H1 (cell line): ENCODE measurements at regions of chrX and their contacts with region 1.

Region 1: GRCh38 chrX:118603981-118604380 is 108.4 kb downstream of the DOCK11 start:
- DNase-seq: peak in 1 of 2 experiments; percentile 49
- H3K4me3 ChIP-seq: no peak overlapping the region
- H3K27ac ChIP-seq: no peak overlapping the region
- H3K4me1 ChIP-seq: no peaks in the 10 kb centered on the region
- H3K27me3 ChIP-seq: no peaks in the 10 kb centered on the region
- CTCF ChIP-seq: peak; percentile 47 to 74 (median 64)
- EP300 ChIP-seq: no peak
- POLR2A ChIP-seq: no peak
- RAD21 ChIP-seq: peak; percentile 66 to 81

Region 2: GRCh38 chrX:118459494-118459893 is 144.5 kb before region 1 on chrX:
- CTCF ChIA-PET with region 1: interaction called, 48 read pairs
- POLR2A ChIA-PET with region 1: interaction called, 3 read pairs
- DNase-seq: no peak
- H3K4me3 ChIP-seq: no peak overlapping the region
- H3K27ac ChIP-seq: no peak overlapping the region
- H3K4me1 ChIP-seq: no peaks in the 10 kb centered on the region
- H3K27me3 ChIP-seq: no peaks in the 10 kb centered on the region
- CTCF ChIP-seq: peak in 2 of 3 experiments; percentile 47 to 58; a peak in 3 of 4 replicates
- EP300 ChIP-seq: no peak
- POLR2A ChIP-seq: no peak
- RAD21 ChIP-seq: peak; percentile 74 to 77

Region 3: DNA sequence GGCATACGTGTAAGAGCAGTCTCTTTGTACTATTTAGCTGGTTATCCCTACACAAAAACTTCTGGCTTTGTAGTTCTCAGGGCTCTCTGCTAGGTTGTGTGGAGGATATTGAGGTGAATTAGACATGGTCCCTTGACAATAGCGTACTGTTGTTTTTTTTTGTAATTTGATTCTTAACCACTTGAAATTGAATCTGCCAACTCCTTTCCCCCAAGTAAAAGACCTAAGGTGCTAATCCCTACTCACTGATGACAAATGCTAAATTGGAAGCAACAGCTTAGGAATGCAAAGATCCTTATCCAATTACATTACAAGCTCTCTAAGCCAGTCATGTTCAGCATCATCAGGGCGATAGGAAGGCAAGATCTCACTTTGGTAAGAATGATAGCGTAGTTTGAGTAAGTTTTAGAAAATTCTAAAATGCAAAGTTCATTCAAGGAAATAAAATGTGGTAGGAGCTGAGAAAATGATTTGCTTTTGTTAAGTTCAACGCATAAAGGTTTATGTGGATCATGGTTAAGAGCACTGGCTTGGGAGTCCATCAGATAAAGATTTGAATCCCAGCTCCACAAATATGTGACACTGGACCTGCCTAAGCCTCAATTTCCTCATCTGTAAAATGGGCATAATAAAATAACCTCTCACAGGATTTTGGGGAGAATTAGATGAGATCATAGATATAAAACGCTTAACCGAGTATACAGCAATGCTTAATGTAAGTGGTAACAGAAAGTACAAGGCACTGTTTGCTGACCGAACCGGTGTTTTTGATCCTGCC is 69.1 kb before region 1 on chrX:
- CTCF ChIA-PET with region 1: interaction called, 20 read pairs
- POLR2A ChIA-PET with region 1: no interaction called
- DNase-seq: no peak
- H3K4me3 ChIP-seq: peak overlapping the region in 1 of 4 experiments; percentile 46; a peak in 1 of 8 replicates
- H3K27ac ChIP-seq: peak overlapping the region; percentile 5; the same call in 1 of the 2 replicates
- H3K4me1 ChIP-seq: peaks cover 0 to 26% (median 1%) of the 10 kb centered on the region in 4 experiments; a peak in 3 of 7 replicates
- H3K27me3 ChIP-seq: no peaks in the 10 kb centered on the region
- CTCF ChIP-seq: no peak
- EP300 ChIP-seq: no peak
- POLR2A ChIP-seq: no peak
- RAD21 ChIP-seq: no peak

Region 4: GRCh38 chrX:118614150-118614549 is 10.2 kb after region 1 on chrX:
- CTCF ChIA-PET with region 1: interaction called, 17 read pairs
- POLR2A ChIA-PET with region 1: no interaction called
- DNase-seq: no peak
- H3K4me3 ChIP-seq: no peak overlapping the region
- H3K27ac ChIP-seq: no peak overlapping the region
- H3K4me1 ChIP-seq: no peaks in the 10 kb centered on the region; a peak in 2 of 7 replicates
- H3K27me3 ChIP-seq: no peaks in the 10 kb centered on the region
- CTCF ChIP-seq: no peak
- EP300 ChIP-seq: no peak
- POLR2A ChIP-seq: no peak
- RAD21 ChIP-seq: no peak

Region 5: DNA sequence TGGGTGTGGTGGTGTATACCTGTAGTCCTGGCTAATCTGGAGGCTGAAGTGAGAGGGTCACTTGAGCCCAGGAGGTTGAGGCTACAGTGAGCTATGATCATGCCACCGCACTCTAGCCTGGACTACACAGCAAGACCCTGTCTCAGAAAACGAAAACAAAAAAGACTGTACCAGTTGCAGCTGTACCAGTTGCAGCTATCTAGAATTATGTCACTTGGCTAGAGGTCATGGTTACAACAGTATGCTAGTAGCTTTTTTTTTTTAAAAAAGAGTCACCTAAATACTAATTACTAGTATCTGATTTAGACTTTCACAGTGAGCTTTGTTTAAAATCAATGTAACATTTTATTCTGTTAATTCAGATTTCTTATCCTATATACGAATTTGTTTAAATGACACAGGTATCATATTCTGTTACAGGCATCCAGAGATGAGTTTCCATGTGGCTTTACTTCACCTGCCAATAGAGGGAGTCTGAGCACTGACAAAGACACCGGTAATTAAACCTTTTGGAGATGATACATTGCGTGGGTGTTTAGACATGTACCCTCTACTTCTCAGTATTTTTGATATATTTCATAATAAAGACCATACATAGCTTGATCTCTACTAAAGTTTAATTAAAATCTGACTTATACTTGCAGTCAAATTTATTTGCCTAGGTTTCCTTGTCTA is 23.2 kb after region 1 on chrX:
- CTCF ChIA-PET with region 1: interaction called, 11 read pairs
- POLR2A ChIA-PET with region 1: no interaction called
- DNase-seq: no peak
- H3K4me3 ChIP-seq: no peak overlapping the region
- H3K27ac ChIP-seq: no peak overlapping the region
- H3K4me1 ChIP-seq: no peaks in the 10 kb centered on the region
- H3K27me3 ChIP-seq: no peaks in the 10 kb centered on the region
- CTCF ChIP-seq: peak in 2 of 3 experiments; percentile 26 to 42; a peak in 2 of 4 replicates
- EP300 ChIP-seq: no peak
- POLR2A ChIP-seq: no peak
- RAD21 ChIP-seq: peak; percentile 33 to 50

Region 6: GRCh38 chrX:118698516-118699170 is 94.7 kb after region 1 on chrX:
- CTCF ChIA-PET with region 1: no interaction called
- POLR2A ChIA-PET with region 1: no interaction called
- DNase-seq: no peak
- H3K4me3 ChIP-seq: no peak overlapping the region
- H3K27ac ChIP-seq: no peak overlapping the region
- H3K4me1 ChIP-seq: no peaks in the 10 kb centered on the region
- H3K27me3 ChIP-seq: no peaks in the 10 kb centered on the region
- CTCF ChIP-seq: no peak
- EP300 ChIP-seq: no peak
- POLR2A ChIP-seq: no peak
- RAD21 ChIP-seq: no peak